CD4-positive, alpha-beta T cell (primary cell): ENCODE measurements at regions of chr14 and their contacts with region 1.

Region 1: GRCh38 chr14:55051426-55052268 is at the start of gene MAPK1IP1L:
- DNase-seq: peak; percentile 83 to 95 (median 90)
- ATAC-seq: peak; percentile 88
- H3K4me3 ChIP-seq: peak within 1 kb of the TSS; percentile 91
- H3K4me3 Mint-ChIP-seq: peak within 1 kb of the TSS; percentile 95
- H3K27ac ChIP-seq: peak within 1 kb of the TSS; percentile 98 to 99
- H3K27ac Mint-ChIP-seq: peak within 1 kb of the TSS; percentile 96
- H3K4me1 ChIP-seq: peaks cover 27% of the 10 kb centered on the region
- H3K4me1 Mint-ChIP-seq: peaks cover 49% of the 10 kb centered on the region
- H3K27me3 ChIP-seq: no peaks in the 10 kb centered on the region
- H3K27me3 Mint-ChIP-seq: no peaks in the 10 kb centered on the region
- CTCF ChIP-seq: peak; percentile 99
- total RNA-seq, gene MAPK1IP1L: 198 to 207 TPM

Region 2: DNA sequence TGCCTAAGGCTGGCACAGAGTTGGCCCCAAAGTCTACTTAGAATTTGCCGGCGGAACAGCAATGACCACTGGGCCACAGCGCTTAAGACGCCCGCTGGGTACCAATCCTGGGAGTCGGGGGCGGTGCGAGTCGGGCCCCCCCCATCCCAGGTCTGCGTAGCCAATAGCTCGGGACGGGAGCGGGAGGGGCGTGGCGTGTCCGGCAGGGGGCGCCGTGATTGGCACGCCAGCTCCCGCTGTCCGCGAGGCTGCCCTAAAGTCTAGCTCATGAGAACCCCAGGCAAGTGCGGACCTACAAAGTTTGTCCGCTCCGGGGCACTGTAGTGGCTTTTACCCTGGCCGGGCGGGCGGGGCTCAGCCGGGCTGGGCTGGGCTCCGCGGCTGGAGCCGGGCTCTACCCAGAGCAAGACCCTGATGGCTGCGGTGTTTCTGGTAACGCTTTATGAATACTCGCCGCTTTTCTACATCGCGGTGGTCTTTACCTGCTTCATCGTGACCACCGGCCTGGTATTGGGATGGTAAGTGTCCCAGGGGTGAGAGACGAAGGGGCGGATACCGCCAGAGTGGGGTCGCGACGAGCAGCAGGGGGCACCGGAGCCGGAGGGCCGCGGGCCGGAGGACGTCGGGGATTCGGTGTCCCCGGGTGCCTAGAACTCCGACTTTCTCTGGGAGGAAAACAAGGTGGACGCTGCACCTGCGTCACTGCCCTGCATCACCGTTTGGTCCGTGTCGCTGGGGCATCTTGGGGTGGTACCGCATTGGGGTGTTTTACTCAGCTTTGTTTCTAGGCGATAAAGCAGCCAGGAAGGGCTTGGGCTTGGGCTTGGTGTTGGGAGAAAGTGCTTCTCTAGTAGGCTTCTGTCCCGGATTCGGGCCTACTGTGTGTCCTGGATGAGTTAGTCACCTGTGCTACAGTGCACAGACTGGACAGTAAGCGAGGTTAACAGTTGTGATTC is 541.8 kb before region 1 on chr14 and contains the start of gene CGRRF1:
- CTCF ChIA-PET with region 1: no interaction called
- POLR2A ChIA-PET with region 1: no interaction called
- intact Hi-C with region 1: loop called in 1 of 2 experiments (anchors 10 kb)
- DNase-seq: peak; percentile 87 to 97 (median 94)
- ATAC-seq: peak; percentile 95
- H3K4me3 ChIP-seq: peak within 1 kb of the TSS; percentile 79
- H3K4me3 Mint-ChIP-seq: peak within 1 kb of the TSS; percentile 96
- H3K27ac ChIP-seq: peak within 1 kb of the TSS; percentile 6 to 59
- H3K27ac Mint-ChIP-seq: peak within 1 kb of the TSS; percentile 78
- H3K4me1 ChIP-seq: peaks cover 31% of the 10 kb centered on the region
- H3K4me1 Mint-ChIP-seq: peaks cover 59% of the 10 kb centered on the region
- H3K27me3 ChIP-seq: no peaks in the 10 kb centered on the region
- H3K27me3 Mint-ChIP-seq: peaks cover 4% of the 10 kb centered on the region
- CTCF ChIP-seq: peak; percentile 64
- total RNA-seq, gene CGRRF1: 34.5 to 42.8 TPM

Region 3: DNA sequence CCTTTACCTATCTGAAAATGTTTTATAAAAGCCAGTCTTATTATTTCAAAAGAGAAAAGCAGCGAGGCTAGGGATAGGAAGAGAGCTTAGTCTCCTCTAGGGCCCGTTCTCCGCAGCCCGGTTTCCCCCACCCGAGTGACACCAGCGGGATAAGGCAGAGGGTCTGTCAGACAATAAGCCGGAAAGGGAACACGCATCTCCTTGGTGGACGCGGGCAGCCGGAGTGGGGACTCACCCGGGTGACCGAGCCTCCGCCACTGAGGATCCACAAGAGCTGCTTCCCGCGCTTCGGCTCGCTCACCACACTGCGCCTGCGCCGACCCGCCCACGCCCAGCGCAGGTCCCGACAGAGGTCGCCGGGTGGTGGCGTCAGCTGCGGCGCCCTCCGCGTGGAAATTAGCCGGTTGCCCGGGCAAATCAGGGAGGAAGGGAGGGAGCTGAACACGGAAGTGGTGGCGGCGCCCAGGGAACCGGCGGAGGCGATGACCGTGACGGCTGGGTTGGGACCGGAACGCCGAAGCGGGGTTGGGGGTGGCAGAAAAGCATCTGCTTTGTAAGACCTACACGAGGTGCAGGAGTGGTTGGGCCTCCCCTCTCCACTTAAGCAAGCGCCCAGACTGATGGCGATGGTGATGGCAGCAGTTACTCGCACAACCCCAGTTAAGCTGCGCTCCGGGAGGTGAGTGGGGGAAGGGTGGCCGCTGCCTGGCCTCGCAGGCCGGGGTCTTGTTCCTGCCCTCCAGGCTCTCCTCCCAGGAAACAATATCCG is 24.7 kb before region 1 on chr14 and contains the starts of genes SOCS4 and WDHD1:
- CTCF ChIA-PET with region 1: interaction called, 55 read pairs
- POLR2A ChIA-PET with region 1: interaction called, 58 read pairs
- intact Hi-C with region 1: loop called (anchors 1 to 2 kb)
- DNase-seq: peak; percentile 90 to 98 (median 94)
- ATAC-seq: peak; percentile 87
- H3K4me3 ChIP-seq: peak within 1 kb of the TSS; percentile 79
- H3K4me3 Mint-ChIP-seq: peak within 1 kb of the TSS; percentile 91
- H3K27ac ChIP-seq: peak within 1 kb of the TSS; percentile 78 to 87
- H3K27ac Mint-ChIP-seq: peak within 1 kb of the TSS; percentile 88
- H3K4me1 ChIP-seq: peaks cover 9% of the 10 kb centered on the region
- H3K4me1 Mint-ChIP-seq: peaks cover 62% of the 10 kb centered on the region
- H3K27me3 ChIP-seq: no peaks in the 10 kb centered on the region
- H3K27me3 Mint-ChIP-seq: no peaks in the 10 kb centered on the region
- CTCF ChIP-seq: peak; percentile 9
- total RNA-seq, gene SOCS4: 19.5 to 20.7 TPM
- total RNA-seq, gene WDHD1: 1.8 to 2.2 TPM

Region 4: DNA sequence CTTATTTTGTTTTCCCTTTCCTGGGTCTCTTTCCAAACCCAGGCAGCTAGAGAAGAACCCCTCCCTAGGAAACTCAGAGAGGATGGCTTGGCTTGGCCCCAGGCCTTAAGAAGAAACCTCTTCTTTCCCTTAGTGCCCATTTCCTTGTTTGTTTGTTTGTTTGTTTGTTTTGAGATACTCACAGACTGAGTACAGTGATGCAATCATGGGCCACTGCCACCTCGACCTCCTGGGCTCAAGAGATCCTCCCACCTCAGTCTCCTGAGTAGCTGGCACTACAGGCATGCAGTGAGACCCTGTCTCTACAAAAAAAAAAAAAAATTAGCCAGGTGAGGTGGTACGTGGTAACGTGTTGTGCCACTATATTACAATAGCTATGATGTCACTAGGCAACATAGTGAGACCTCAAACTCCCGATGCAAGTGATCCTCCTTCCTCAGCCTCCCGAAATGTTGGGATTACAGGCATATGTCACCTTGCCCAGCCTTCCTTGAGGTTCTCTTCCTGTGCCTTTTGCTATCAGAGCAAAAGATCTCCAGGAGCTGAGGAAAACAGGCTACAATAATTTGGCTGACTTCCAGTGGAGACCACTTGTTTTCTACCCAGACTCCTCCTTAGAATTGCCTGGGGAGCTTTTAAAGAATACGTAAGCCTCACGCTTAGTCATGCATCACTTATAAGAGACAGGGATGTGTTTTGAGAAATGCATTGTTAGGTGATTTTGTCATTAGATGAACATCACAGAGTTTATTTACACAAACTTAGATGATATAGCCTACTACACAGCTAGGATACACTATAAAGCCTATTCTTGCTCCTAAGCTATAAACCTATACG is 42.9 kb after region 1 on chr14:
- CTCF ChIA-PET with region 1: interaction called, 8 read pairs
- POLR2A ChIA-PET with region 1: interaction called, 3 read pairs
- intact Hi-C with region 1: loop called in 1 of 2 experiments (anchors 1 kb)
- DNase-seq: no peak
- ATAC-seq: no peak
- H3K4me3 ChIP-seq: no peak overlapping the region
- H3K4me3 Mint-ChIP-seq: no peak overlapping the region
- H3K27ac ChIP-seq: no peak overlapping the region
- H3K27ac Mint-ChIP-seq: no peak overlapping the region
- H3K4me1 ChIP-seq: peaks cover 29% of the 10 kb centered on the region
- H3K4me1 Mint-ChIP-seq: peaks cover 19% of the 10 kb centered on the region
- H3K27me3 ChIP-seq: no peaks in the 10 kb centered on the region
- H3K27me3 Mint-ChIP-seq: no peaks in the 10 kb centered on the region
- CTCF ChIP-seq: no peak

Region 5: GRCh38 chr14:55265197-55265596 is 213.6 kb after region 1 on chr14:
- CTCF ChIA-PET with region 1: no interaction called
- POLR2A ChIA-PET with region 1: no interaction called
- intact Hi-C with region 1: loop called in 1 of 2 experiments (anchors 5 kb)
- DNase-seq: peak in 2 of 14 experiments; percentile 53 to 66
- ATAC-seq: peak; percentile 34
- H3K4me3 ChIP-seq: no peak overlapping the region
- H3K4me3 Mint-ChIP-seq: no peak overlapping the region
- H3K27ac ChIP-seq: no peak overlapping the region
- H3K27ac Mint-ChIP-seq: no peak overlapping the region
- H3K4me1 ChIP-seq: no peaks in the 10 kb centered on the region
- H3K4me1 Mint-ChIP-seq: peaks cover under 1% of the 10 kb centered on the region
- H3K27me3 ChIP-seq: no peaks in the 10 kb centered on the region
- H3K27me3 Mint-ChIP-seq: no peaks in the 10 kb centered on the region
- CTCF ChIP-seq: no peak

Region 6: GRCh38 chr14:55579724-55580469 is 528.2 kb after region 1 on chr14 and contains the start of gene KTN1:
- CTCF ChIA-PET with region 1: no interaction called
- POLR2A ChIA-PET with region 1: interaction called, 3 read pairs
- intact Hi-C with region 1: loop called in 1 of 2 experiments (anchors 10 kb)
- DNase-seq: peak; percentile 70 to 94 (median 84)
- ATAC-seq: peak; percentile 87
- H3K4me3 ChIP-seq: peak within 1 kb of the TSS; percentile 81
- H3K4me3 Mint-ChIP-seq: peak within 1 kb of the TSS; percentile 98
- H3K27ac ChIP-seq: peak within 1 kb of the TSS; percentile 68 to 82
- H3K27ac Mint-ChIP-seq: peak within 1 kb of the TSS; percentile 92
- H3K4me1 ChIP-seq: peaks cover 27% of the 10 kb centered on the region
- H3K4me1 Mint-ChIP-seq: peaks cover 28% of the 10 kb centered on the region
- H3K27me3 ChIP-seq: no peaks in the 10 kb centered on the region
- H3K27me3 Mint-ChIP-seq: no peaks in the 10 kb centered on the region
- CTCF ChIP-seq: no peak
- total RNA-seq, gene KTN1: 59.9 to 68.4 TPM